ENCODE measurements at regions of chr15 and their contacts with region 1.

Region 1: GRCh38 chr15:40743921-40744814 is 10.9 kb downstream of the RMDN3 start:
- DNase-seq: peak; percentile 85
- ATAC-seq: peak; percentile 96
- H3K4me3 Mint-ChIP-seq: peak overlapping the region; percentile 36
- H3K27ac Mint-ChIP-seq: peak overlapping the region; percentile 88
- H3K4me1 Mint-ChIP-seq: peaks cover 33% of the 10 kb centered on the region
- H3K27me3 Mint-ChIP-seq: no peaks in the 10 kb centered on the region
- CTCF ChIP-seq: no peak

Region 2: DNA sequence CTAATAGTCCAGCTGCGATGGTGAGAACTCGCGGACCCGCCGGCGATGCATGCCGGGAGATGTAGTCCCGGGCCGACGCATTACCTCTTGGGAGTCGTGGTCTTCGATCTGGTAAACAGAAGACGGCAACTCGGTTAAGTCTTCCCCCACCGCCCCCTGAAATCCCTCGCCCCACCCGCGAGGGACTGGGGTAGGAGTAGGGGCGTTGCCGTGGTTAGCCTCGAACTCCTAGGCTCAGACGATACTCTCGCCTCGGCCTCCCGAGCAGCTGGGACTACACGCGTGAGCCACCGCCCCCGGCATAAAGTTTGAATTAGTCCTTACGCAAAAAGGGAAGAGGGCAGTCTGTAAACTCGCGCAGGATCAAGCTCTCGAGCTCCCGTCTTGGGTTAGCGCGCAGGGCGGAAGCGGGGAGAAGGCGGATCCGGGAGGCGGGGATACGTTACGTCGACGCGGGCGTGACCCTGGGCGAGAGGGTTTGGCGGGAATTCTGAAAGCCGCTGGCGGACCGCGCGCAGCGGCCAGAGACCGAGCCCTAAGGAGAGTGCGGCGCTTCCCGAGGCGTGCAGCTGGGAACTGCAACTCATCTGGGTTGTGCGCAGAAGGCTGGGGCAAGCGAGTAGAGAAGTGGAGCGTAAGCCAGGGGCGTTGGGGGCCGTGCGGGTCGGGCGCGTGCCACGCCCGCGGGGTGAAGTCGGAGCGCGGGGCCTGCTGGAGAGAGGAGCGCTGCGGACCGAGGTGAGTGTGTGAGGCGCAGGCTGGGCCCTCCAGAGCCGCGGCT is 49.3 kb before region 1 on chr15 and contains the start of gene RAD51:
- CTCF ChIA-PET with region 1: interaction called, 3 read pairs
- POLR2A ChIA-PET with region 1: interaction called, 16 read pairs
- intact Hi-C with region 1: no loop called
- DNase-seq: peak; percentile 96
- ATAC-seq: peak; percentile 94
- H3K4me3 Mint-ChIP-seq: peak within 1 kb of the TSS; percentile 98
- H3K27ac Mint-ChIP-seq: peak within 1 kb of the TSS; percentile 99
- H3K4me1 Mint-ChIP-seq: peaks cover 20% of the 10 kb centered on the region
- H3K27me3 Mint-ChIP-seq: no peaks in the 10 kb centered on the region
- CTCF ChIP-seq: no peak
- total RNA-seq, gene RAD51: 66.5 to 77.0 TPM

Region 3: GRCh38 chr15:40722934-40723333 is 21.2 kb before region 1 on chr15:
- CTCF ChIA-PET with region 1: interaction called, 3 read pairs
- POLR2A ChIA-PET with region 1: interaction called, 11 read pairs
- intact Hi-C with region 1: no loop called
- DNase-seq: no peak
- ATAC-seq: peak; percentile 55
- H3K4me3 Mint-ChIP-seq: no peak overlapping the region
- H3K27ac Mint-ChIP-seq: no peak overlapping the region
- H3K4me1 Mint-ChIP-seq: peaks cover 17% of the 10 kb centered on the region
- H3K27me3 Mint-ChIP-seq: no peaks in the 10 kb centered on the region
- CTCF ChIP-seq: no peak

Region 4: GRCh38 chr15:40754883-40755811 is 11.0 kb after region 1 on chr15 and contains the start of gene RMDN3:
- CTCF ChIA-PET with region 1: interaction called, 4 read pairs
- POLR2A ChIA-PET with region 1: interaction called, 12 read pairs
- intact Hi-C with region 1: no loop called
- DNase-seq: peak; percentile 95
- ATAC-seq: peak; percentile 95
- H3K4me3 Mint-ChIP-seq: peak within 1 kb of the TSS; percentile 90
- H3K27ac Mint-ChIP-seq: peak within 1 kb of the TSS; percentile 99
- H3K4me1 Mint-ChIP-seq: peaks cover 27% of the 10 kb centered on the region
- H3K27me3 Mint-ChIP-seq: no peaks in the 10 kb centered on the region
- CTCF ChIP-seq: no peak
- total RNA-seq, gene RMDN3: 20.8 to 21.6 TPM

Region 5: GRCh38 chr15:40763801-40764732 is 19.9 kb after region 1 on chr15 and contains the start of gene GCHFR:
- CTCF ChIA-PET with region 1: interaction called, 12 read pairs
- POLR2A ChIA-PET with region 1: interaction called, 9 read pairs
- intact Hi-C with region 1: no loop called
- DNase-seq: peak; percentile 78
- ATAC-seq: peak; percentile 54
- H3K4me3 Mint-ChIP-seq: peak within 1 kb of the TSS; percentile 86
- H3K27ac Mint-ChIP-seq: peak within 1 kb of the TSS; percentile 92
- H3K4me1 Mint-ChIP-seq: peaks cover 42% of the 10 kb centered on the region
- H3K27me3 Mint-ChIP-seq: no peaks in the 10 kb centered on the region
- CTCF ChIP-seq: peak; percentile 43
- total RNA-seq, gene GCHFR: 44.8 to 46.6 TPM